GM10248 (cell line): ENCODE measurements at regions of chr2 and their contacts with region 1.

Region 1: GRCh38 chr2:233404222-233404621 is 49.9 kb downstream of the DGKD start:
- DNase-seq: peak; percentile 65
- CTCF ChIP-seq: peak; percentile 68

Region 2: GRCh38 chr2:233108611-233109490 is 295.4 kb before region 1 on chr2:
- CTCF ChIA-PET with region 1: no interaction called
- POLR2A ChIA-PET with region 1: no interaction called
- DNase-seq: no peak
- CTCF ChIP-seq: no peak

Region 3: GRCh38 chr2:233418761-233419625 is 14.8 kb after region 1 on chr2:
- CTCF ChIA-PET with region 1: interaction called, 121 read pairs
- POLR2A ChIA-PET with region 1: interaction called, 3 read pairs
- DNase-seq: peak; percentile 67
- CTCF ChIP-seq: no peak

Region 4: DNA sequence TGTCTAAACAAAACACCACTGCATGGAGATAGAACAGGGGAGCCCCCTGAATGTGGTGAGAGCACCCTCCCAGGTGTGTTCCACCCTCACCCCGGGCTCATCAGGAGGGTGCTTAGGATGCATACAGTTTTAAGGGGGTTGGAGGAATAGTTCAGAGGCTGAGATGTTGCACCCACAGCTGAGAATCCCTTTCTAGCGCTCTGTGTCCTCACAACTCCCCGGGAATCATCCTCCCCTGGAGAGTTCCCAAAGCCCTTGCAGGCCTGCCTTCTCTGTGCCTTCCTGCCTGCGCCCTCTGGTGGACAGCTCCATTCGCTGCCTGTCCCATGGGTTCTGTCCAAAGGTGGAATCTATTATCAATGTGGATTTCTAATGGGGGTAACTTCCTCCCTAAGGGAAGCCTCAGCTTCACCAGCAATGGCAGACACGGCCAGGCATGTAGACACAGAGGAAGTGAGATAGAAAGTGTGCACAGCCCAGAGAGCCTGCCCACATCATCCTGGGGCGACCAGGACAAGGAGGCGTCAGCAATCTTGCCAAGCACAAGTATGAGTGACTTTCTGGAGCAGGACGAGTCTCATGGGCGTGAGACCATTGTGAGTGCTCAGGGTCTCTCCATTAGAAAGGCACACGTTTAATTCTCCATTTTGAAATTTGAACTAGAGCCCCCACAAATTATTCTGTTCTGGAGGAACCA is 307.2 kb after region 1 on chr2:
- CTCF ChIA-PET with region 1: interaction called, 25 read pairs
- POLR2A ChIA-PET with region 1: no interaction called
- DNase-seq: peak; percentile 69
- CTCF ChIP-seq: peak; percentile 89